ENCODE measurements at regions of chr7 and their contacts with region 1.

Region 1: DNA sequence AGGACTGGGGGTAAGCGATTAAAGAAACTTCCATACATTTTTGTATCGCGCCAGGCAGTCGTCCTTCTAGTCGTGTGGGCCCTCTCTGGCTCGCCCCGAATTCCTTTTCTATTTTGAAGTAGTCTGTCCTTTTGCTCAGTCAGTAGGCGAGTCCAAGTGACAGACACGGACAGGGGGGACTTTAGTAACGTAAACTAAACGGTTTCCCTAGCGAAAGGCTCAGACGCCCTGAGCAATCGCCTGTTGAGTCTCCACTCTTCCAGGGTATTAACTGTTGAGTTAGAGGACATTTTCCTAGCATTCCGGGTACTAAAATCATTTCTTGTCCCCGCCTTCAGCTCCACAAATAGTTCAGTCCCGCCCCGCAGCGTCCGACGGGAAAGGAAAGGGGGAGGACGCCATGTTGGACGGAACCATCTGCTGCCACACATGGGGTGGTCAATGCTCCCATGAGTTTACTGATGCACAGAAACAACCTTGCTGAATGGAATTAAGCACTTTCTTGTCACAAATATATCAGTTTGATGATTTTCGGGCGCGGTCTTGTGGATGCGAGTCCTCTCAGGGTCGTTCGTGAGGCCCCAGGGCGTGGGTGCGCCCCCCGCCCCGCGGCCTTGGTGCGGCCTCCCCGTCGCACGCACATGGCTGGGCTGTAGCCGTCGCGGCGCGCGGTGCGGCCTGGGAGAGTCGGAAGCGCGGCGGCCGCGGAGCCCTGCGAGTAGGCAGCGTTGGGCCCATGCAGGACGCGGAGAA is at the start of gene EIF3B:
- DNase-seq: peak; percentile 91 to 96
- ATAC-seq: peak; percentile 92 to 93 (median 93)
- H3K4me3 ChIP-seq: peak within 1 kb of the TSS; percentile 98
- H3K27ac ChIP-seq: peak within 1 kb of the TSS; percentile 100
- H3K4me1 ChIP-seq: peaks cover 34% of the 10 kb centered on the region
- H3K27me3 ChIP-seq: no peaks in the 10 kb centered on the region
- CTCF ChIP-seq: no peak
- total RNA-seq, gene EIF3B: 101 to 203 (median 180) TPM

Region 2: DNA sequence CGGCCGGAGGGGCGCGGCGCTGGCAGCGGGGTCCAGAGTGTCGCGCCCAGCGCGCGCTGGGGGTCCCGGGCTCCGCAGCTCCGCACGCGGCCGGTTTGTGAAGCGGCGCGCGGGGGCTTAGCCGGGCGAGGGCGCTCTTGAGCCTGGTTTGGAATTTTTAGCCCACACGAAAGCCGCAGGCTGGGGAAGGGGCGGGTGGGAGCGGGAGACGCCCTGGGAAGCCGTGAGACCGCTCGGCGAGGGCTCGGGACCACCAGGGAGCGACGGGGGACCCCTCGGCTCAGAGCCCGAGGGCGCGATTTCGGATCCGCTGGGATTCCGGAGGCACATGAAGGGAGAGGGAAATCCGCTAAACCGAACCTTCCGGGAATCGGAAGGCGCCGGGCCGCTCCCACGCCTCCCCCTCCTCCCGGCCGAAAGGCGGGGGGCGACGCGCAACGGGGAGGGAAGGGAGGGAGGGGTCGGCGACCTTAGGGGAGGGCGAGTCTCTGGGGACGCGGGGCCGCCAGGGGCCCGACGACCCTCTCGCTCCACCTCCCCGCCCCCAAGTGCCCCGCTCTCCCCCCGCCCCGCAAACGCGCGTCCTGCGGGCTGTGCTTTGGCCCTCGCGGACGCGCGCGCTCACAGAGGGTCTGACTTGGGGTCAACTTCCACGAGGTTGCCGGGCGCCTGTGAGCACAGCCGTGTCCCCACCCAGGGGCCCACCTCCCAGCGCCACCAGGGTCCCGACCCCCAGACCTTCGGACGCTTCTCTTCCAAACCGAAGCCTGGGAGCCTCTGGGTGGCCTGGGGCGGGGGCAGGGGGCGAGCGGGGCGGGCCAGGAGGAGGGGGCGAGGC is 689.4 kb before region 1 on chr7:
- intact Hi-C with region 1: loop called in 1 of 2 experiments (anchors 10 kb)
- DNase-seq: peak; percentile 66 to 80
- ATAC-seq: peak; percentile 59 to 86 (median 65)
- H3K4me3 ChIP-seq: peak overlapping the region; percentile 74
- H3K27ac ChIP-seq: peak overlapping the region; percentile 9
- H3K4me1 ChIP-seq: peaks cover 12% of the 10 kb centered on the region
- H3K27me3 ChIP-seq: peaks cover 0 to 79% (median 27%) of the 10 kb centered on the region in 3 donors
- CTCF ChIP-seq: peak; percentile 67

Region 3: GRCh38 chr7:2248984-2249694 is 105.2 kb before region 1 on chr7:
- intact Hi-C with region 1: loop called in 1 of 2 experiments (anchors 5 kb)
- DNase-seq: peak; percentile 70 to 80
- ATAC-seq: peak; percentile 52 to 78 (median 66)
- H3K4me3 ChIP-seq: no peak overlapping the region
- H3K27ac ChIP-seq: no peak overlapping the region
- H3K4me1 ChIP-seq: no peaks in the 10 kb centered on the region
- H3K27me3 ChIP-seq: no peaks in the 10 kb centered on the region
- CTCF ChIP-seq: no peak

Region 4: DNA sequence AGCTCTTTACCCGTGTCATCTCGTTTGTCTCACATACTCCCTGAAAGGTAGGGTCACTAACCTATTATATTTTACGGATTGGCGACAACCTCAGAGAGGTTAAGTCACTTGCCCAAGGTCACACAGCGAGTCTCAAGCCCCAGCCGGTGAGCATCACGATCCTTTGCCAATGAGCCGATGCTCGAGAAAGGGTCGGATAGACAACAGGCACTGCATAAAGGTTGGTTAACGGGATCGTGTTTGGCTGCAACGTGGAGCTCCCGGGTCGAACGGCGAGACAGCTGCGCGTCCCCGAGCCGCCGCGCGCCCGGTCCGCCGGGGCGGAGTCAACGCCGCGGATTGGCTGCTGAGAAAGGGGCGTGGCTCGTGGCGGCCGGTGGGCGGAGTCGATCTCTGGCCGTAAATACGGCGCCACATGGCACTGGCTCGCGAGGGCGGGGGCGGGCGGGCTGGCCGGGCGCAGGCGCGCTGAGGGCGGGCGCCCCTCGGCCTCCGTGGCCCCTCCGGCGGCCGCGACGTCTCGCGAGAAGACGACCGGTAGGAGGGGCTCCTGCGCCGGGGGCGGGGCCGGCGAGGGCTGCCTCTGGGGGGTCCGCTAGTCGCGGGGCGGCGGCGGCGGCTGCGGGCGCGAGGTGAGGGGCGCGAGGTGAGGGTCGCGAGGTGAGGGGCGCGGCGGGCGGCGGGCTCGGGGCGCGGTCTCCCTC is 48.8 kb after region 1 on chr7 and contains the start of gene CHST12:
- intact Hi-C with region 1: loop called in 1 of 2 experiments (anchors 5 kb)
- DNase-seq: peak; percentile 94 to 97
- ATAC-seq: peak; percentile 93 to 94 (median 93)
- H3K4me3 ChIP-seq: peak within 1 kb of the TSS; percentile 95
- H3K27ac ChIP-seq: peak within 1 kb of the TSS; percentile 77
- H3K4me1 ChIP-seq: peaks cover 26% of the 10 kb centered on the region
- H3K27me3 ChIP-seq: no peaks in the 10 kb centered on the region
- CTCF ChIP-seq: no peak
- total RNA-seq, gene CHST12: 6.6 to 12.0 (median 9.4) TPM